ENCODE measurements at regions of chr5 and their contacts with region 1.

Region 1: DNA sequence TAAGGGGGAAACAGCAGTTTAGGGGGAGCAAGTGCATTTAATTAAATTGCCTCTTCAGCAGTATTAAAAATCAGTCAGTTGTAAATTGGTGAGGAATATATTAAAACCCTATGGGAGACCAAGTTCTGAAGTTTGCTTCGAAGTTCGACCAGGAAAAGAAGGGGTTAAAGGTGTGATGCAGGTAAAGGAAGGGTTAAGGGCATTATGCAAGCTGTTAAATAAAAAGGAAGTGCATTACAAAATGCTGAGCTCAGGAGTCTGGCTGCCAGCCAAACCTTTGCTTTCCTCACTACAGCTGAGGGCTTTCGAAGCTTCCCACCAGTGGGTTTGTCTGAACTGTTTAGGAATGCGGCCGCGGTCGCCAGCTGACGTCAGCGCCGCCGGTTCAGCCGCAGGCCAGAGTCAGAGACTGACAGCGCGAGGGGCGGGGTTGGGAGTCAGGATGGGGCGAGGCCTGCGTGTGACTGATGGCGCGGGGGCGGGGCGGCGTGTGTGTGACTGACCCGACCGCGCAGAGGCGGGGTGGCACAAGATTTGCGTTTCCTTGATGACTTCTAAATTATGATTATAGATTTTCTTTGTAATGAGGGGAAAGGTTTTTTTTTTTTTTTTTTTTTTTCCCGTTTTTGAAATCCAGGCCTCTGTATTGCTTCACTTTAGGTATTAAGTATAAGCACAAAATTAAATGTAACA is 76.6 kb downstream of the ZSWIM6 start:
- DNase-seq: peak; percentile 61
- ATAC-seq: peak; percentile 99
- H3K4me3 ChIP-seq: peak overlapping the region; percentile 45; the same call in 1 of the 2 replicates
- H3K27ac ChIP-seq: no peak overlapping the region
- H3K4me1 ChIP-seq: no peaks in the 10 kb centered on the region; the same call in 1 of the 2 replicates
- H3K27me3 ChIP-seq: no peaks in the 10 kb centered on the region
- CTCF ChIP-seq: no peak
- EP300 ChIP-seq: peak; percentile 78 to 82; a peak in 3 of 4 replicates
- POLR2A ChIP-seq: no peak
- RAD21 ChIP-seq: no peak

Region 2: DNA sequence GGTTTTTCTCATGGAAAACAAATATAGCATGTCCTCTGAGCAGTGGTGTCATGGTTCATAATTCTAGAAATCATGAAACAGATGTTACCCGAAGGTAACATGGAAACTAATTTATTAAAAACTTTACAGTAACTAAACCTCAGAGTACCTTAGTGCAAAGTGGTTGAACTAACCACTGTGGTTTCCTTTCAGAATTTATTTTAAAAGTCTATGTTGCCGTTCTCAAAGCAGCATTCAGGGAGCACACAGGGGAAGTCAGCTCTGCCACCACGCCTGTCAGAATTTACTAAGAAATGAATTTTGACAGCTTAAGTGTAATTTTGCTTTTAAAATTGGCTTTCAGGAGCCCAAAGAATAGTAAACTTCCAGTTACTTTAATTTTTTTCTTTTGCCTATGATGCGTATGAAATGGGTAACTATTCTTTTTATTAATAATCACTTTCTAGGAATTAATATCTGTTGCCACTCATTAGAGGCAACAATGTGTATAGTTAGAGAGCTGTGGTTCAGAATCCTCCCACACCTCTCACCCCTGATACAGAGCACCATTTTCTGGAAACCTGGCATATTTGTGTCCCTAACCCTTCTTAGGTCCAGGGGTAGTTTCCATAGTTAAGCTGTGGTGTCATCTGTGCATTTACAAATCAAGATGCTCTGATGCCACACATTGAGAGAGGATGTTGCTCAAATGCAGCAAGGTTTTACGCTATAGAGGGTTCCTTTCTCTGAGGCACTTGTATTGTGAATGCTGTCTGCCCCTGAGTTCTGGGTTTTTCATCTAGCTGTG is 126.1 kb after region 1 on chr5:
- CTCF ChIA-PET with region 1: interaction called, 3 read pairs
- POLR2A ChIA-PET with region 1: no interaction called
- RAD21 ChIA-PET with region 1: interaction called, 7 read pairs
- SMC1A ChIA-PET with region 1: interaction called, 6 read pairs
- in situ Hi-C with region 1: no loop called
- intact Hi-C with region 1: loop called (anchors 2 kb)
- DNase-seq: peak; percentile 64
- ATAC-seq: peak; percentile 91
- H3K4me3 ChIP-seq: no peak overlapping the region
- H3K27ac ChIP-seq: no peak overlapping the region
- H3K4me1 ChIP-seq: peaks cover 9% of the 10 kb centered on the region
- H3K27me3 ChIP-seq: no peaks in the 10 kb centered on the region
- CTCF ChIP-seq: no peak
- EP300 ChIP-seq: peak in 1 of 2 experiments; percentile 37; a peak in 2 of 4 replicates
- POLR2A ChIP-seq: no peak
- RAD21 ChIP-seq: no peak

Measured in GM12878 (cell line).